ENCODE measurements at regions of chr5 and their contacts with region 1.

Region 1: DNA sequence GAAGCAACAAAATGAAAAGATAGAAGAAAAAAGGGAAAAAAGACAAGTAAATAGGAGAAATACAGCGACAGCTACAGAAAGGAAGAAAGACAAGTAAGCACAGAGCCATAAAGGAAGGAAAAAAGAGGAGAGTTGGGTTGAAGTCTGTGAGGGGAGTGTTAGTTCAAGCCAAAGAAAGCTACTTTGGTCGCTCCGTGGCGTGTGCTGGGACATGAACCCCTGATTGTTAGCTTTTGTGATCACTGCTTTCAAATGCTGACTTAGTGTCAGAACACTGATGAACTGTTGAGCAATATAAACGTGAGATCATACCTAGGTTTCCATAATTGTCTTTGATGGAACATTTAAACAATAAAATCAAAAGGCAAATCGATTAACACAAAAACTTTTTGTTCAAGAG is 370.1 kb downstream of the TMEM161B start:
- DNase-seq: no peak
- H3K4me3 ChIP-seq: no peak overlapping the region
- H3K27ac ChIP-seq: no peak overlapping the region
- H3K4me1 ChIP-seq: peaks cover 10% of the 10 kb centered on the region
- CTCF ChIP-seq: no peak

Region 2: GRCh38 chr5:87885758-87886157 is 12.8 kb before region 1 on chr5:
- CTCF ChIA-PET with region 1: no interaction called
- POLR2A ChIA-PET with region 1: interaction called, 3 read pairs
- intact Hi-C with region 1: loop called (anchors 1 kb)
- DNase-seq: peak; percentile 4
- H3K4me3 ChIP-seq: no peak overlapping the region
- H3K27ac ChIP-seq: no peak overlapping the region
- H3K4me1 ChIP-seq: no peaks in the 10 kb centered on the region
- CTCF ChIP-seq: peak; percentile 36; the same call in 1 of the 2 replicates

Region 3: GRCh38 chr5:87909382-87909781 is 10.8 kb after region 1 on chr5:
- CTCF ChIA-PET with region 1: no interaction called
- POLR2A ChIA-PET with region 1: no interaction called
- intact Hi-C with region 1: no loop called
- DNase-seq: no peak
- H3K4me3 ChIP-seq: no peak overlapping the region
- H3K27ac ChIP-seq: no peak overlapping the region
- H3K4me1 ChIP-seq: no peaks in the 10 kb centered on the region
- CTCF ChIP-seq: no peak